ENCODE measurements at regions of chr9 and their contacts with region 1.

Region 1: GRCh38 chr9:116737152-116737546 is 50.0 kb downstream of the TRIM32 start:
- DNase-seq: peak; percentile 27
- H3K4me3 Mint-ChIP-seq: no peak overlapping the region
- H3K27ac Mint-ChIP-seq: no peak overlapping the region
- H3K4me1 Mint-ChIP-seq: peaks cover 8% of the 10 kb centered on the region
- H3K27me3 Mint-ChIP-seq: peaks cover 5% of the 10 kb centered on the region

Region 2: GRCh38 chr9:116860509-116861120 is 123.5 kb after region 1 on chr9:
- intact Hi-C with region 1: loop called (anchors 1 kb)
- DNase-seq: no peak
- H3K4me3 Mint-ChIP-seq: no peak overlapping the region
- H3K27ac Mint-ChIP-seq: no peak overlapping the region
- H3K4me1 Mint-ChIP-seq: no peaks in the 10 kb centered on the region
- H3K27me3 Mint-ChIP-seq: no peaks in the 10 kb centered on the region

Region 3: GRCh38 chr9:117555964-117556629 is 818.9 kb after region 1 on chr9:
- intact Hi-C with region 1: loop called (anchors 10 kb)
- DNase-seq: peak; percentile 1
- H3K4me3 Mint-ChIP-seq: no peak overlapping the region
- H3K27ac Mint-ChIP-seq: no peak overlapping the region
- H3K4me1 Mint-ChIP-seq: no peaks in the 10 kb centered on the region
- H3K27me3 Mint-ChIP-seq: no peaks in the 10 kb centered on the region

Measured in activated T-helper 1 cell treated with anti-CD3 and anti-CD28 coated beads, Interleukin-12 subunit alpha, Interleukin-12 subunit beta, Interleukin-2, Interleukin-4 antibody, amounts not matched to agents 30 ng/mL and 10 ng/mL and 1 ng/mL, durations not matched to agents 14 hours and 24 hours and 36 hours (primary cell).